ENCODE measurements at regions of chr2 and their contacts with region 1.

Region 1: GRCh38 chr2:207746131-207746530 is 23.6 kb downstream of the FZD5 start:
- DNase-seq: peak in 20 of 35 experiments; percentile 10 to 63 (median 27)
- ATAC-seq: peak in 3 of 4 experiments; percentile 49 to 66 (median 62)
- H3K4me3 ChIP-seq: no peak overlapping the region
- H3K4me3 Mint-ChIP-seq: no peak overlapping the region
- H3K27ac ChIP-seq: no peak overlapping the region
- H3K27ac Mint-ChIP-seq: no peak overlapping the region
- H3K4me1 ChIP-seq: no peaks in the 10 kb centered on the region
- H3K4me1 Mint-ChIP-seq: no peaks in the 10 kb centered on the region
- H3K27me3 ChIP-seq: no peaks in the 10 kb centered on the region
- H3K27me3 Mint-ChIP-seq: no peaks in the 10 kb centered on the region

Region 2: GRCh38 chr2:206657087-206657486 is 1089.0 kb before region 1 on chr2:
- CTCF ChIA-PET with region 1: no interaction called
- POLR2A ChIA-PET with region 1: no interaction called
- DNase-seq: no peak
- ATAC-seq: no peak
- H3K4me3 ChIP-seq: no peak overlapping the region
- H3K4me3 Mint-ChIP-seq: no peak overlapping the region
- H3K27ac ChIP-seq: no peak overlapping the region
- H3K27ac Mint-ChIP-seq: no peak overlapping the region
- H3K4me1 ChIP-seq: no peaks in the 10 kb centered on the region
- H3K4me1 Mint-ChIP-seq: no peaks in the 10 kb centered on the region
- H3K27me3 ChIP-seq: no peaks in the 10 kb centered on the region
- H3K27me3 Mint-ChIP-seq: peaks cover 4 to 5% of the 10 kb centered on the region in 2 donors

Region 3: GRCh38 chr2:207632575-207633493 is 113.3 kb before region 1 on chr2:
- CTCF ChIA-PET with region 1: no interaction called
- POLR2A ChIA-PET with region 1: no interaction called
- DNase-seq: peak in 1 of 35 experiments; percentile 9
- ATAC-seq: peak in 1 of 4 experiments; percentile 34
- H3K4me3 ChIP-seq: no peak overlapping the region
- H3K4me3 Mint-ChIP-seq: no peak overlapping the region
- H3K27ac ChIP-seq: no peak overlapping the region
- H3K27ac Mint-ChIP-seq: no peak overlapping the region
- H3K4me1 ChIP-seq: no peaks in the 10 kb centered on the region
- H3K4me1 Mint-ChIP-seq: peaks cover 0 to 1% (median under 1%) of the 10 kb centered on the region in 3 donors
- H3K27me3 ChIP-seq: no peaks in the 10 kb centered on the region
- H3K27me3 Mint-ChIP-seq: no peaks in the 10 kb centered on the region

Region 4: DNA sequence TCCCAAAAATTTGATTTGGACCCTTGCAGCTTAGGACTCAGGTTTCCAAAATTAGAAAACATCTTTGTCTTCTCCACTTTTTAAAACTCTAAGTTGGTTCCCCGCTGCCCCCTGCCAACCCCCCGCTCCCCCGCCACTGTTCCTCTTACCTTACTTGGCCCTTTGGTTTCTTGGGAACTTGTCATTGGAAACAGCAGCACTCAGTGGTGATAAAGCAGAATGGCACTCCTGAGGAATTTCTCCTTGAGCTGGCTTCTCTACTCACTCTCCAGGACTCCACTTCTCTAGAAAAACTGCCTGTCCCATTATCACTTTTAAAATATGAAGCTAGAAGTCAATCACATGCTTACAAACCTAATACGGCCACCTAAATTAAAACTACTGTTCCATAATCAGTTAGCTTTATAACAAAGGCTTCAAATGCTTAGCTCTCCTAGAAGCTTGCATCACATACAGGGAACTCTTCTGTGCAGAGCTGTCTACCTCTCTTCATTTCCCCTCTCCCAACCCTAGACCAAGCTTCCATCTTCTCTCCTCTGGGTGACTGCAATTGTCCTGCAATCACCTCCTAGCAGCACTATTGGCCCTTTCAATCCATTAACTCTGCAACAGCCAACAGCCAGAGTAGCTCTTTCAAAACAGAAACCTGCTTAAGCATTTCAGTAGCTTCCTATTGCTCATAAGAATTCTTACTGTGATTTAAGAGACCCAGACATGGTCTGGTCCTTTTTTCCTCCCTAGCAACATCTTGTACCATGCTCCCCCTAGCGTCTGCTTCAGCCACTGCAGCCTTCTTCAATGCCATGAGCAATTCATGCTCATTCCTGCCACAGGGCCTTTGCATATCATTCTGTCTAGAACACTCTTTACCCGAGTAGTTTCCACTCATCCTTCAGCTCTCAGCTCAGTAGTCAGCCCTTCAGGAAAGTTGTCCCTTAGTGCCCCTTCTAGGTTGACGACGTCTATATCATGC is 294.4 kb after region 1 on chr2:
- CTCF ChIA-PET with region 1: interaction called, 6 to 15 read pairs
- POLR2A ChIA-PET with region 1: no interaction called
- DNase-seq: peak; percentile 20 to 71 (median 48)
- ATAC-seq: peak; percentile 50 to 57 (median 52)
- H3K4me3 ChIP-seq: no peak overlapping the region
- H3K4me3 Mint-ChIP-seq: no peak overlapping the region
- H3K27ac ChIP-seq: no peak overlapping the region
- H3K27ac Mint-ChIP-seq: no peak overlapping the region
- H3K4me1 ChIP-seq: no peaks in the 10 kb centered on the region
- H3K4me1 Mint-ChIP-seq: no peaks in the 10 kb centered on the region
- H3K27me3 ChIP-seq: peaks cover 0 to 2% of the 10 kb centered on the region in 2 experiments
- H3K27me3 Mint-ChIP-seq: peaks cover 0 to 6% of the 10 kb centered on the region in 2 donors

Measured in T-cell (primary cell).